WTC11 (cell line): ENCODE measurements at regions of chr5 and their contacts with region 1.

Region 1: GRCh38 chr5:177311723-177312648 is at the start of gene MXD3:
- DNase-seq: peak; percentile 99
- ATAC-seq: peak; percentile 71
- H3K4me3 Mint-ChIP-seq: peak within 1 kb of the TSS; percentile 84
- H3K27ac Mint-ChIP-seq: peak within 1 kb of the TSS; percentile 32; the same call in 1 of the 2 replicates
- H3K4me1 Mint-ChIP-seq: peaks cover 18% of the 10 kb centered on the region
- H3K27me3 Mint-ChIP-seq: no peaks in the 10 kb centered on the region
- CTCF ChIP-seq: no peak
- total RNA-seq, gene MXD3: 16.9 to 25.7 TPM (median 18.8 TPM) in 3 replicates

Region 2: DNA sequence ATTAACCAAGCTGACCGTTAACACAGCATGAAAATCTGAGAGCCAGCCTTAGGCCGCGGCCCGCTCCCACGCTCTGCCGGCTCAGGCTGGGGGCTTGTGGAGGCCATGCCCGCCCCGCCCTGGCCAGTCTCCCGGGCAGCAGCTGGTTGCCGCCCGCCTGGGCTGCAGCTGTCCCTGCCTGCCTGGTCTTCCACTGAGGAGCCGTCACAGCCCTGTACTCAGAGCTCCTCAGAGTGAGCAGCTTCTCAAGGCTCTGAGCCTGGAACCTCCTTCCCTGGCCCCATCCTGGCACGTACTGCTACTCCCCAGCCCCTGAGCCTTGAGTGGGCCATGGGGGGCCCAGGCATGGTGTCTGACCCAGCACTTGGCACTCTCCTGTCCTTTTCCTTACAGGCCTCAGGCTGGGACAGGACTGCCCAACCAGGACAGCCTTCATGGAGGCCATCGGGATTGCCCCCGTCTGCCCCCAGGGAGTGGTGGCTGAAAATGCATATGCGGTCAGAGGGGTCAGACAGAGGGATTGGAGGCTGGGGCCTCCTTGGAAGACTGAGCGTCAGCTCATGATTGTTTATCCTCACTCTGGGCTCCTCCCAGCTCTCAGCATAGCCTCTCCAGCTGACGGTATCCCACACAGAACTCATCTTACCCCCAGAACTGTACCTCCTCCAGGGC is 213.4 kb before region 1 on chr5:
- CTCF ChIA-PET with region 1: interaction called, 11 read pairs
- POLR2A ChIA-PET with region 1: interaction called, 6 read pairs
- DNase-seq: no peak
- ATAC-seq: no peak; the same call in 1 of the 2 replicates
- H3K4me3 Mint-ChIP-seq: no peak overlapping the region
- H3K27ac Mint-ChIP-seq: peak overlapping the region; percentile 70
- H3K4me1 Mint-ChIP-seq: peaks cover 21% of the 10 kb centered on the region
- H3K27me3 Mint-ChIP-seq: no peaks in the 10 kb centered on the region; the same call in 1 of the 2 replicates
- CTCF ChIP-seq: no peak

Region 3: DNA sequence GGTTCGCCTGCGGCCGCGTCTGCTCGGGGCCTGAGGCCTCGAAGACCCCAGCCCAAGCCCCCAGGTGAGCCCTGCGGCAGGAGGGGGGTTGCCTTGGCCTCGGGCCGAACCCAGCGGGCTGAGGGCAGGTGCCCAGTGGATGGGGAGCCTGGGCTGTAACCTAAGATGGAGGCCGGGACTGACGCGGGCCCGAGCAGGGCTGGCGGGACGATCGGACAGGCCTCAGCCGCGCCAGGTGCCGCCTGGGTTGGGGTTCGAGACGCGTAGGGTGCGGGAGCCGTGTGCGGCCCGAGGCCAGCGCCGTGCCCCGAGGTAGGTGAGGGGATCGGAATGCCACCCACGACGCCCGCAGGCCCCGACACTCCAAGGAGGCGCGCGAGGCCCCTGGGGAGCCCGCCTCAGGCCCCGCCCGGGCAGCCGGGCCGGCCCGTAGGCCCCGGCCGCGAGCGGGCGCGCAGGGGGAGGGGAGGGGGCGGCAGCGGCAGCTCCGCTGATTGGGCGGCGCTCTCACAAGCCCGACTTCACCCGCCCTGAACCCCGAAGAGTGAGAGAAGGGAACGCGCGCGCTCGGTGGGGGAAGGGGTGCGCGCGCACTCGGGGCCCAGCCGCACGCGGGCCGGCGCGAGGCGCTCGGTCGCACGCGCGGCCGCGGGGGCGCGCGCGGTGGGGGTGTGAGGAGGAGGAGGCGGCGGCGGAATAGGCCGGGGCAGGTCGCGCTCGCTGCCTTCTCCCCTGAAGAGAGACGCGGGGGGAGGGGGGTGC is 178.7 kb before region 1 on chr5 and contains the start of gene NSD1:
- CTCF ChIA-PET with region 1: interaction called, 12 read pairs
- POLR2A ChIA-PET with region 1: interaction called, 3 read pairs
- DNase-seq: peak; percentile 93
- ATAC-seq: peak; percentile 69
- H3K4me3 Mint-ChIP-seq: peak within 1 kb of the TSS; percentile 85
- H3K27ac Mint-ChIP-seq: peak within 1 kb of the TSS; percentile 68; the same call in 1 of the 2 replicates
- H3K4me1 Mint-ChIP-seq: peaks cover 44% of the 10 kb centered on the region
- H3K27me3 Mint-ChIP-seq: no peaks in the 10 kb centered on the region; the same call in 1 of the 2 replicates
- CTCF ChIP-seq: no peak
- total RNA-seq, gene NSD1: 144 to 153 TPM (median 148 TPM) in 3 replicates

Region 4: GRCh38 chr5:177194274-177194673 is 117.7 kb before region 1 on chr5:
- CTCF ChIA-PET with region 1: no interaction called
- POLR2A ChIA-PET with region 1: no interaction called
- DNase-seq: no peak
- ATAC-seq: no peak
- H3K4me3 Mint-ChIP-seq: no peak overlapping the region
- H3K27ac Mint-ChIP-seq: no peak overlapping the region
- H3K4me1 Mint-ChIP-seq: no peaks in the 10 kb centered on the region
- H3K27me3 Mint-ChIP-seq: no peaks in the 10 kb centered on the region
- CTCF ChIP-seq: no peak

Region 5: GRCh38 chr5:177351385-177352329 is 39.7 kb after region 1 on chr5 and contains the start of gene LMAN2:
- CTCF ChIA-PET with region 1: interaction called, 25 read pairs
- POLR2A ChIA-PET with region 1: no interaction called
- DNase-seq: peak; percentile 90
- ATAC-seq: peak; percentile 98
- H3K4me3 Mint-ChIP-seq: peak within 1 kb of the TSS; percentile 98
- H3K27ac Mint-ChIP-seq: peak within 1 kb of the TSS; percentile 100
- H3K4me1 Mint-ChIP-seq: peaks cover 32% of the 10 kb centered on the region
- H3K27me3 Mint-ChIP-seq: peaks cover 28% of the 10 kb centered on the region
- CTCF ChIP-seq: no peak
- total RNA-seq, gene LMAN2: 141 to 162 TPM (median 147 TPM) in 3 replicates

Region 6: GRCh38 chr5:177382423-177383029 is 70.5 kb after region 1 on chr5:
- CTCF ChIA-PET with region 1: interaction called, 28 read pairs
- POLR2A ChIA-PET with region 1: interaction called, 5 read pairs
- DNase-seq: peak; percentile 46
- ATAC-seq: peak; percentile 70
- H3K4me3 Mint-ChIP-seq: no peak overlapping the region
- H3K27ac Mint-ChIP-seq: no peak overlapping the region
- H3K4me1 Mint-ChIP-seq: peaks cover 17% of the 10 kb centered on the region
- H3K27me3 Mint-ChIP-seq: peaks cover 18% of the 10 kb centered on the region
- CTCF ChIP-seq: no peak

Region 7: DNA sequence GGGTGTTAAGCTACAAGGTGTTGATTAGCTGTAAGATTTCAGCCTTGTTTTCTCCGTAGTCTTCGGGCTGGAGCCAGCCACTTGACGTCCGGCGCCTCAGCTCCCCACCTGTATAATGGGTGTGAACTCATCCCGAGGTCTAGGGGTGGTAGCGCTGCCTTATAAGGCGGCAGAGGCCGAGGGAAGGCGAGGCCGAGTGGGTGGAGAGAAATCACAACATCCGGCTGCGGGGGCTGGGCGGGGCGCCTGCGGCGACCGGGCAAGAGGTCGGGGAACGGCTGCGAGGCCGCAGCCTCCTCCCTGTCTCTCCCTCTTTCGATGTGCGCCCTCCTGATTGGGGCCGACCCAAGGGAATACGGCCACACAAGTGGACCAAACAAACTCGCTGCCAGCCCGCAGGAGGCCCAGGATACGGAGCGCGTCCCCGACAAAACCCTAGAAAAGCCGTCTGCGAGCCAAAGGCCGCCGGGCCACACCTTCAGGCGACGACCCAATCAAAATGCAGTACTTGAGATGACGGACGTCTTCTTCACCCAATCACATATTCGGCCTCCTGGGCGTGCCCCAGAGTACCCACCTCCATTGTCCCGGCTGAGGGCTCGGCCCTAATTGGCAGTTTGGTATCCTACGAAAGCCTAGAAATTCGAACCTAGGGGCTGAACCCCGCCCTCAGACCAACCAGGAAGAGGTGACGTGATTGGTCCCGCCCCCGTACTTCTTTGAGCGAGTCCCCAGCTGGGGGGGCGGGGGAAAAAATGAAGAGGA is 114.0 kb after region 1 on chr5:
- CTCF ChIA-PET with region 1: interaction called, 21 read pairs
- POLR2A ChIA-PET with region 1: interaction called, 3 read pairs
- DNase-seq: peak; percentile 100
- ATAC-seq: peak; percentile 94
- H3K4me3 Mint-ChIP-seq: peak overlapping the region; percentile 84
- H3K27ac Mint-ChIP-seq: peak overlapping the region; percentile 98
- H3K4me1 Mint-ChIP-seq: peaks cover 18% of the 10 kb centered on the region
- H3K27me3 Mint-ChIP-seq: peaks cover 5% of the 10 kb centered on the region
- CTCF ChIP-seq: no peak

Region 8: DNA sequence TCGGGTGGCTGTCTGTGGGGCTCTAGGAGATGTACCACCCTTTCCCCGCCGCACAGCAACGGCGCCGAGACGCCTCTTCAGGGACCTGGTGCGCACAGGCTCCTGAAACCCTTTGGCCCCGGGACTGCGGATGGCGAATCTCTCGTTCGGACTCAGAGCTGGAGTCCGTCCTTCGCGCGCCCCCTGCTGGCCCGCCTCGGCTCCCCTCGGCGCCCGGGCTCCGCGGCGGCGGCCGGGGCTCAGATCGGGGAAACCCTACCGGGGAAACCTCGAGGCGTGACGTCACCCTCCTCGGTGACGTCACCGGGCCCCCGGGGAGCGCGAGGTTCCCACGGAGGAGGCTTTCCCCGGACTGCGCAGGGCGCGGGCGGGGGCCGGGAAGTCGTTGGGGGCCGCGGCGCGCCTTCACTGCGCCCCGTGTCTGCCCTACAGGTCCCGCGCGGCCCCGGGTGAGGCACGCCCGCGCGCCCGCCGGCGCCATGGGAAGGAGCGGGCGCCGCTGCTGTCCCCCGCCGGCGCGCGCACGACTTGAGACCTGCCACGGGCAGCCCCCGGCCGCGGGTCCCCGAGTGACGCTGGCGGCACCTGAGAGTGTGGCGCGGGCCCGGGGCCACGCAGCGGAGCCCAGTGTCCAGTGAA is 142.5 kb after region 1 on chr5:
- CTCF ChIA-PET with region 1: interaction called, 91 read pairs
- POLR2A ChIA-PET with region 1: interaction called, 4 read pairs
- DNase-seq: peak; percentile 92
- ATAC-seq: peak; percentile 7
- H3K4me3 Mint-ChIP-seq: peak overlapping the region; percentile 81
- H3K27ac Mint-ChIP-seq: no peak overlapping the region
- H3K4me1 Mint-ChIP-seq: peaks cover 36% of the 10 kb centered on the region
- H3K27me3 Mint-ChIP-seq: peaks cover 19% of the 10 kb centered on the region
- CTCF ChIP-seq: peak; percentile 78